Activated CD4-positive, alpha-beta memory T cell treated with anti-CD3 and anti-CD28 coated beads for 36 hours (primary cell): ENCODE measurements at regions of chr3 and their contacts with region 1.

Region 1: GRCh38 chr3:45656575-45657363 is 32.4 kb upstream of the SACM1L start:
- DNase-seq: peak; percentile 92
- H3K4me3 Mint-ChIP-seq: no peak overlapping the region
- H3K27ac Mint-ChIP-seq: no peak overlapping the region
- H3K4me1 Mint-ChIP-seq: peaks cover 19% of the 10 kb centered on the region
- H3K27me3 Mint-ChIP-seq: no peaks in the 10 kb centered on the region

Region 2: GRCh38 chr3:45043728-45044299 is 613.0 kb before region 1 on chr3:
- CTCF ChIA-PET with region 1: interaction called, 12 read pairs
- POLR2A ChIA-PET with region 1: no interaction called
- intact Hi-C with region 1: no loop called
- DNase-seq: no peak
- H3K4me3 Mint-ChIP-seq: no peak overlapping the region
- H3K27ac Mint-ChIP-seq: no peak overlapping the region
- H3K4me1 Mint-ChIP-seq: peaks cover 16% of the 10 kb centered on the region
- H3K27me3 Mint-ChIP-seq: peaks cover 10% of the 10 kb centered on the region

Region 3: GRCh38 chr3:45528429-45528828 is 128.3 kb before region 1 on chr3:
- CTCF ChIA-PET with region 1: interaction called, 11 read pairs
- POLR2A ChIA-PET with region 1: no interaction called
- intact Hi-C with region 1: loop called (anchors 1 kb)
- DNase-seq: peak; percentile 68
- H3K4me3 Mint-ChIP-seq: no peak overlapping the region
- H3K27ac Mint-ChIP-seq: no peak overlapping the region
- H3K4me1 Mint-ChIP-seq: peaks cover 16% of the 10 kb centered on the region
- H3K27me3 Mint-ChIP-seq: no peaks in the 10 kb centered on the region

Region 4: DNA sequence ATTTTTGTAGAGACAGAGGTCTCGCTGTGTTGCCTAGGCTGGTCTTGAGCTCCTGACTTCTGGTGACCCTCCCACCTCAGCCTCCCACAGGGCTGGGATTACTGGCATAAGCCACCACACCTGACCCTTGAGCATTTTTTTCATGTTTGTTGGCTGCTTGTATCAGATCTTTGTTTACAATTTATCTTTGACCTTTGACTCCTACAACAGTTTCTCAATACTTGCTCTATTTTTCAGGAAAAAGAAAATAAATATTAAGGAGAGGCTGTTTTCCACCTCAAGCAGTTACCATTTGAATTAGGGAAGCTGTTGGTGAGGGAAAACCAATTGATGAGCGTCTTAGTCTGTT is 17.8 kb before region 1 on chr3:
- CTCF ChIA-PET with region 1: interaction called, 12 read pairs
- POLR2A ChIA-PET with region 1: no interaction called
- intact Hi-C with region 1: no loop called
- DNase-seq: no peak
- H3K4me3 Mint-ChIP-seq: no peak overlapping the region
- H3K27ac Mint-ChIP-seq: no peak overlapping the region
- H3K4me1 Mint-ChIP-seq: peaks cover 6% of the 10 kb centered on the region
- H3K27me3 Mint-ChIP-seq: no peaks in the 10 kb centered on the region

Region 5: GRCh38 chr3:45688882-45689756 is 32.4 kb after region 1 on chr3 and contains the start of gene SACM1L:
- CTCF ChIA-PET with region 1: interaction called, 32 read pairs
- POLR2A ChIA-PET with region 1: no interaction called
- intact Hi-C with region 1: no loop called
- DNase-seq: peak; percentile 98
- H3K4me3 Mint-ChIP-seq: peak within 1 kb of the TSS; percentile 75
- H3K27ac Mint-ChIP-seq: peak within 1 kb of the TSS; percentile 85
- H3K4me1 Mint-ChIP-seq: peaks cover 44% of the 10 kb centered on the region
- H3K27me3 Mint-ChIP-seq: peaks cover 4% of the 10 kb centered on the region
- total RNA-seq, gene SACM1L: 64.3 to 71.2 TPM

Region 6: GRCh38 chr3:45748068-45748467 is 91.3 kb after region 1 on chr3:
- CTCF ChIA-PET with region 1: no interaction called
- POLR2A ChIA-PET with region 1: no interaction called
- intact Hi-C with region 1: no loop called
- DNase-seq: no peak
- H3K4me3 Mint-ChIP-seq: no peak overlapping the region
- H3K27ac Mint-ChIP-seq: no peak overlapping the region
- H3K4me1 Mint-ChIP-seq: peaks cover 3% of the 10 kb centered on the region
- H3K27me3 Mint-ChIP-seq: no peaks in the 10 kb centered on the region

Region 7: GRCh38 chr3:46078712-46079400 is 422.1 kb after region 1 on chr3:
- CTCF ChIA-PET with region 1: interaction called, 6 read pairs
- POLR2A ChIA-PET with region 1: no interaction called
- intact Hi-C with region 1: loop called (anchors 10 kb)
- DNase-seq: peak; percentile 90
- H3K4me3 Mint-ChIP-seq: no peak overlapping the region
- H3K27ac Mint-ChIP-seq: peak overlapping the region; percentile 2
- H3K4me1 Mint-ChIP-seq: peaks cover 13% of the 10 kb centered on the region
- H3K27me3 Mint-ChIP-seq: peaks cover 15% of the 10 kb centered on the region